ENCODE measurements at regions of chr5 and their contacts with region 1.

Region 1: GRCh38 chr5:126544087-126544740 is 50.8 kb downstream of the ALDH7A1 start:
- DNase-seq: no peak
- ATAC-seq: peak; percentile 36
- H3K4me3 ChIP-seq: no peak overlapping the region
- H3K27ac ChIP-seq: no peak overlapping the region
- H3K4me1 ChIP-seq: no peaks in the 10 kb centered on the region
- H3K27me3 ChIP-seq: no peaks in the 10 kb centered on the region
- CTCF ChIP-seq: peak; percentile 43

Region 2: DNA sequence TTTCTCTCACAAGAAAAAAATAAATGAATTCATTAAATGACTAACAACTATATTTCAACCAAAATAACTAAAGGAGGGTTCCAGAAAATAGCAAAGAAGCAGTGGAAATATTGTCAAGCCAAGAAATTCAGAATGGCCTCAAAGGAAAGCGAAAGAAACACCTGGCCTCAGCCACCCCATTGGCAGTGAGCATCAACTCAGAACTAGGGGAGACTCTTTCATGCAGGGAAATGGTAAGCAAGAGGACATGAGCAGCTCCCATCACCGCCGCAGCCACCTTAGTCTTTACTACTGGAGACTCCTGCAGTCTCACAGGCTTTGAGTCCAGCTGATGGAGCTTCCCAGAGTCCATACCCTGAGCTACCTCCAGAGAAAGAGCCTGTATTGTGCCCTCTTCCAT is 464.9 kb before region 1 on chr5:
- intact Hi-C with region 1: no loop called
- DNase-seq: no peak
- ATAC-seq: peak; percentile 12
- H3K4me3 ChIP-seq: no peak overlapping the region
- H3K27ac ChIP-seq: no peak overlapping the region
- H3K4me1 ChIP-seq: no peaks in the 10 kb centered on the region
- H3K27me3 ChIP-seq: no peaks in the 10 kb centered on the region
- CTCF ChIP-seq: no peak

Region 3: DNA sequence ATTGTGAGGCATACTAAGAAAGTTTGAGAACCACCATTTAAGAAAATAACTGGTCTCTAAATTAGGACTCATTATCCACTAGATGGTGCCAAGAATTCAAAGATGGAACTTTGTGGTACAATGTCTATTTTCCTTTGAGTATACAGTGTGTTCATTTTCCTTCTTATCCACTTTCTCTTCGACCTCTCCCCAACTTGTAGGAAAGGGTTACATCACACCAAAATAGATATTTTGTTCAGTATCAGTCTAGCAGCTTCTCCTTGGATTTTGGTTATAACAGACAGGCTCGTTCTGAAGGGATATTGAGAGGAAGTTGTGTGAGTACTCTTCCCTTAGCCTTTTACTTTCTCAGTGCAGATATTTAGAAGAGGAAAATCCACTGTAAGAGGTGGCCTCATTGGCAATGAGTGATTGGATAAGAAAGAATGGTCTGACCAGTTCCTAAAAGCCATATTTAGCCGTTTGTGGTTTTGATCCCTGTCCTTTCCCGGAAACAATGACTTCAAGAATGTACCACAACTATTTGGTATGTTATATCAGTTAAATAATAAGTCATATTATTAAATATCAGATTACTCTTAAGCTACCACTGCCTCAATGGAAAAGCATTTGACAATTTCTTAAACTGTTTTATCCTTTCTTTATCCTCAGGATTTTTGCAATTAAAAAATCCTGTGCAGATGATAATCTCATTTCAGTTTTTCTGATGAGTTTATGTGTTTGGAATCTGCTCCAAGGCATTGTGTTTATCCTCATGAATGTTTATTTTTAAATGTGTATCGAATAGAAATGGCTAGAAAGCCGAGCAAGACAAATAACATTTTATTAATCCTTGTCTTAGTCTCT is 190.0 kb before region 1 on chr5:
- intact Hi-C with region 1: loop called (anchors 5 kb)
- DNase-seq: no peak
- ATAC-seq: peak; percentile 74
- H3K4me3 ChIP-seq: peak overlapping the region; percentile 25
- H3K27ac ChIP-seq: peak overlapping the region; percentile 63
- H3K4me1 ChIP-seq: peaks cover 7% of the 10 kb centered on the region
- H3K27me3 ChIP-seq: no peaks in the 10 kb centered on the region
- CTCF ChIP-seq: peak; percentile 62

Region 4: GRCh38 chr5:126449751-126450271 is 94.4 kb before region 1 on chr5:
- intact Hi-C with region 1: no loop called
- DNase-seq: no peak
- ATAC-seq: peak; percentile 64
- H3K4me3 ChIP-seq: peak overlapping the region; percentile 17
- H3K27ac ChIP-seq: peak overlapping the region; percentile 60
- H3K4me1 ChIP-seq: peaks cover 4% of the 10 kb centered on the region
- H3K27me3 ChIP-seq: no peaks in the 10 kb centered on the region
- CTCF ChIP-seq: no peak